Activated naive CD4-positive, alpha-beta T cell treated with anti-CD3 and anti-CD28 coated beads for 36 hours (primary cell): ENCODE measurements at regions of chr2 and their contacts with region 1.

Region 1: DNA sequence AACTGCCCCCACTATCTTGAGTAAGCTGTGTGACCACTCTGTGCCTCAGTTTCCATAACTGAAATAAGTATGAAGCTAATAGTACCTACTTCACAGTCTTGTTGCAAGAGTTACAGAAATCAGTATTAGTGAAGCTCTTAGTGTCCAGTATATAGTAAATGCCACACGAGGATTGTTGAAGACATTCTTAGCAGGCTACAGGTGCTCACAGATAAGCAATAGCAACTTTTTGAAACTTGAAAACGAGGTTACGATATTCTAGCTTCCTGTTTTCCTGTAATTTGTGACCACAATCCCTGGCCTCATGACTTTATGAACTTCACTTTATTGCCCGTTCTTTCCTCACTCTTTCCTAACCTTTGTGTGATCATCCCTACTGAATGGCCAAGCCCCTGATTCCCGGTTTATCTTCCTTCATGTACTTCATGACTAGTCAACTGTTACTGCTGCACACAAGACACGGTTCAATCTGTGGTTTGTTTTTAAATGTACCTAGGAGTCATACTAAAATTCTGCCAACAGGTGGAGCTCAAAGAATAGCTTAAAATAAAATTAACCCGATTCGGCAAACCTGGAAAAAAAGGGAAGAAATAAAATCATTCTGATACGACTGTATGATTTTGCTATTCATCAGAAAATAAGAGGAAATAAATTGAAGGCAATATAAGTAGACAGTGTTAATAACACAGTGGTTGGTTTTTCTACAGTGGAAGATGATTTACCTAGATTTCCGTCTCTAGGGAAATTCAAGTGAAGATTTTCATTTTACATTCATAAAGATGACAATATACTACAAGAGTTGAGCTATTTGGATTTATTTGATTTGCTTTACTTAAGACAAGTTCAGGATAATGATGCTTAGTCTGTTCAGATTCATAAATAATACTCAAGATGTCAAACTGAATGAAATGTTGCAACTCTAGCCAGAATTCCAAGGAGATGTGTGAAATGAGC is 38.1 kb upstream of the STAT1 start:
- DNase-seq: no peak
- H3K4me3 Mint-ChIP-seq: no peak overlapping the region
- H3K27ac Mint-ChIP-seq: no peak overlapping the region
- H3K4me1 Mint-ChIP-seq: peaks cover 19% of the 10 kb centered on the region
- H3K27me3 Mint-ChIP-seq: no peaks in the 10 kb centered on the region

Region 2: DNA sequence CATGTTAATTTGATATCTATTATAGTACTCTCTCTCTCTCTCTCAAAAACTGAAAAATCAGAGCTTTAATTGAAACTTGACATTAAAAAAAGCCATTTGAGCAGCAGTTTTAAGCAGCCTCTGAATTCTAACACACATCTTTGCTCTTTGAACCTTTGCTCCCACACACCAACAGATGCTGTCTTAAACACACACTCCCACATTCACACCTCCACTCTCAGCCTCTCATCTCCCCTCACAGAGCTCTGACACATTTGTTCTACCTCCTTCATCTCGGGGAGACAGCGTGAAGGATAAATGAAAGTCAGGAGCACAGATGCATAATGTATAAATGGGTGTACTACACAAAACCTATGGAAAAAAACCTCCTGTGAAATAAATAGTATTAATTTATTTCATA is 308.1 kb before region 1 on chr2:
- CTCF ChIA-PET with region 1: no interaction called
- intact Hi-C with region 1: no loop called
- DNase-seq: peak; percentile 37
- H3K4me3 Mint-ChIP-seq: no peak overlapping the region
- H3K27ac Mint-ChIP-seq: no peak overlapping the region
- H3K4me1 Mint-ChIP-seq: peaks cover 36% of the 10 kb centered on the region
- H3K27me3 Mint-ChIP-seq: no peaks in the 10 kb centered on the region

Region 3: DNA sequence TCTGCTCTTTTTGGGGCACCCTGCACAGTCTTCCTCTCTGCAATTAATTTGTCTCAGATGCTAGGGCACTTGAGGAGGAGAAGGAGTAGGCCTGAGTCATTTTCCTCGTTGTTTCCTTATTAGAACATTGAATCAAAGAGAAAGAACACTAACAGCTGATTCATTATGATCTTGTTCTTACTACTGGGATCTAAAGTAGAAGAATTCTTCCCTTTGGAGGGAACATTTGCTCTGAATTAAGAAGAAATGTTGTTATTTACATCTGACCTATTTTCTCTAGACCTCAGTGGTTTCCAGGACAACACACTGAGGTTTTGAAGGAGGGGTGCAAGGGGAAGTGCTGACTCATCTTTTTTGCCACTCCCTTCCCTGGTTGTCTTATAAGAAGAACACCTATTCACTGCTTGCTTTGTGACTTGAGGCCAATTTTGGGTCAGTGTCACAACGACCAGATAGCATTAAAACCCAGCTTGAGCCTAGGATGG is 13.8 kb before region 1 on chr2:
- CTCF ChIA-PET with region 1: interaction called, 40 read pairs
- intact Hi-C with region 1: no loop called
- DNase-seq: no peak
- H3K4me3 Mint-ChIP-seq: no peak overlapping the region
- H3K27ac Mint-ChIP-seq: peak overlapping the region; percentile 68
- H3K4me1 Mint-ChIP-seq: peaks cover 35% of the 10 kb centered on the region
- H3K27me3 Mint-ChIP-seq: no peaks in the 10 kb centered on the region

Region 4: GRCh38 chr2:191103774-191104173 is 51.7 kb after region 1 on chr2:
- CTCF ChIA-PET with region 1: interaction called, 13 read pairs
- intact Hi-C with region 1: no loop called
- DNase-seq: no peak
- H3K4me3 Mint-ChIP-seq: no peak overlapping the region
- H3K27ac Mint-ChIP-seq: peak overlapping the region; percentile 61
- H3K4me1 Mint-ChIP-seq: peaks cover 69% of the 10 kb centered on the region
- H3K27me3 Mint-ChIP-seq: no peaks in the 10 kb centered on the region

Region 5: GRCh38 chr2:191245046-191245868 is 193.2 kb after region 1 on chr2 and contains the start of gene MYO1B:
- CTCF ChIA-PET with region 1: interaction called, 3 read pairs
- intact Hi-C with region 1: loop called (anchors 10 kb)
- DNase-seq: peak; percentile 79
- H3K4me3 Mint-ChIP-seq: peak within 1 kb of the TSS; percentile 82
- H3K27ac Mint-ChIP-seq: peak within 1 kb of the TSS; percentile 22
- H3K4me1 Mint-ChIP-seq: peaks cover 21% of the 10 kb centered on the region
- H3K27me3 Mint-ChIP-seq: no peaks in the 10 kb centered on the region
- total RNA-seq, gene MYO1B: 39.2 to 40.5 TPM

Region 6: DNA sequence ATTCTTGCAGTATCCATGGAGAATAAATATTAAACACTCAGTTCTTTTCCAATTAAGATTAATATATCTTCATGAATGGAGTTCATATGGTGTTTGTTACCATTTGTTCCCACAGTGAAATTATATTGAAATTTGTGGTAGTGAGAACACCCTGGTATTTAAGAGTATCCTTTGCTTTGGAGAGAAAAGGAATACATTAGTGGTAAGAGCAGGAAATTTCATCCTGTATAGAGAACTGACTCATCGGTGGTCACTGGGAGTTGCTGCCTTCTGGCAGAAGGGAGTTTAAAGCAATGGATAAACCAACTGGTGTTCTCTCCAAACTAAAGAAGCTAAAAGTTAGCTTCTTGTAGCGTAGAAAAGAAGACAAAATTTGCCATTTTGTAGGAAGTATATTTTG is 300.4 kb after region 1 on chr2:
- CTCF ChIA-PET with region 1: no interaction called
- intact Hi-C with region 1: no loop called
- DNase-seq: no peak
- H3K4me3 Mint-ChIP-seq: no peak overlapping the region
- H3K27ac Mint-ChIP-seq: no peak overlapping the region
- H3K4me1 Mint-ChIP-seq: no peaks in the 10 kb centered on the region
- H3K27me3 Mint-ChIP-seq: no peaks in the 10 kb centered on the region

Region 7: DNA sequence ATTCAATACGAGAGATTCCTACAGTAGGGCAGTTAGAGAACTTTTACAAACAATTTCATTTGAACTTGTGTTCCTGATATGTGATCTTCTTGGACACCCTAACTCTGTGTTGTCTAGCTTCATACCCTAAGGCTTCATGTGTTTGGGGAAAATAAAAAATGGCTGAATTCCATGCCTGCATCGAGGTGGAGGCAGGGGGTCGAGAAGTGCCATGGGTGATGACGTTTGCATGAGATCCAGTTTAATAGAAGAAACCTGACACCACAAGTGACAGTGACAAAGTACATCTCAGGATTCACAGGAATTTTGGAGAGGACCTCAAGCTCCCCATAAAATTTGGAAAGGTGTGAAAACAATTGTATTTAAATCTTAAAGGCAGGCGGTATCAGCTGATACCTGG is 456.6 kb after region 1 on chr2:
- CTCF ChIA-PET with region 1: no interaction called
- intact Hi-C with region 1: no loop called
- DNase-seq: no peak
- H3K4me3 Mint-ChIP-seq: no peak overlapping the region
- H3K27ac Mint-ChIP-seq: no peak overlapping the region
- H3K4me1 Mint-ChIP-seq: no peaks in the 10 kb centered on the region
- H3K27me3 Mint-ChIP-seq: peaks cover 2% of the 10 kb centered on the region

Region 8: GRCh38 chr2:191521608-191522208 is 469.6 kb after region 1 on chr2:
- CTCF ChIA-PET with region 1: interaction called, 11 read pairs
- intact Hi-C with region 1: loop called (anchors 1 kb)
- DNase-seq: no peak
- H3K4me3 Mint-ChIP-seq: no peak overlapping the region
- H3K27ac Mint-ChIP-seq: no peak overlapping the region
- H3K4me1 Mint-ChIP-seq: no peaks in the 10 kb centered on the region
- H3K27me3 Mint-ChIP-seq: no peaks in the 10 kb centered on the region